Transverse colon (tissue), 4 donors: ENCODE measurements at regions of chr10 and their contacts with region 1.

Region 1: DNA sequence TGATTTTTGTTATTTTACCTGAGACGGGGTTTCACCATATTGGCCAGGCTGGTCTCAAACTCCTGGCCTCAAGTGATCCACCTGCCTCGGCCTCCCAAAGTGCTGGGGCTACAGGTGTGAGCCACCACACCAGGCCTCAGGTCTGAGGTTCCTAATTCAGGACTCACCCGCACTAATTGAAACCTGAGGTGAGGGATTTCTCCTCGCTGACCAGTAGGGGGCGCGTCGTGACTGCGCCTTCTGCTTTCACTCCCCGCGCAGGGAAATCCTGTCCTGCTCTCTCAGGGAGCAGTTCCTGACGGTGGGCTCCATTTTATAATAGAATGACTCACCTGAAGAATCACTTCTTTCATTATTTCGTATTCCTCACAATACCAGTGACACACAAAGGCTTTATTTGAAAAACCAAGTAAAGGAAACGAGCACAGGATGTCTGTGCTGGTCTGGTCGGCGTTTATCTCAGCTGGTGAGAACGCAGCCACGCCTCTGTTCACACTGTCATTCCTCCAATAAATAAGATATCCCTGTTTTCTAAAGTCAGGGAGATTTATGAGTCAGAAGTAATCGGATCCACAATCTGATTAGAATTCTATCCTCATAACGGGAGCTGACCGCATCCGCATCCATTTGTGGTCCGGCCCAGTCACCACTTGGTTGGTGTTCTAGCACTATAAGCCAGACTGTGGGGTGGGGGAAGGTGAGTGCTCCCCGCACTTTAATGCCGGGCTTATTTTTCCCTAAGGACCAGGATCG is 35.4 kb downstream of the BAG3 start:
- DNase-seq: peak; percentile 82
- H3K4me3 ChIP-seq: peak overlapping the region in 1 of 4 donors; percentile 30
- H3K27ac ChIP-seq: no peak overlapping the region
- H3K4me1 ChIP-seq: peaks cover 0 to 3% (median 2%) of the 10 kb centered on the region in 4 donors
- H3K27me3 ChIP-seq: no peaks in the 10 kb centered on the region
- CTCF ChIP-seq: peak; percentile 91 to 95 (median 95)
- EP300 ChIP-seq: no peak
- POLR2A ChIP-seq: no peak

Region 2: DNA sequence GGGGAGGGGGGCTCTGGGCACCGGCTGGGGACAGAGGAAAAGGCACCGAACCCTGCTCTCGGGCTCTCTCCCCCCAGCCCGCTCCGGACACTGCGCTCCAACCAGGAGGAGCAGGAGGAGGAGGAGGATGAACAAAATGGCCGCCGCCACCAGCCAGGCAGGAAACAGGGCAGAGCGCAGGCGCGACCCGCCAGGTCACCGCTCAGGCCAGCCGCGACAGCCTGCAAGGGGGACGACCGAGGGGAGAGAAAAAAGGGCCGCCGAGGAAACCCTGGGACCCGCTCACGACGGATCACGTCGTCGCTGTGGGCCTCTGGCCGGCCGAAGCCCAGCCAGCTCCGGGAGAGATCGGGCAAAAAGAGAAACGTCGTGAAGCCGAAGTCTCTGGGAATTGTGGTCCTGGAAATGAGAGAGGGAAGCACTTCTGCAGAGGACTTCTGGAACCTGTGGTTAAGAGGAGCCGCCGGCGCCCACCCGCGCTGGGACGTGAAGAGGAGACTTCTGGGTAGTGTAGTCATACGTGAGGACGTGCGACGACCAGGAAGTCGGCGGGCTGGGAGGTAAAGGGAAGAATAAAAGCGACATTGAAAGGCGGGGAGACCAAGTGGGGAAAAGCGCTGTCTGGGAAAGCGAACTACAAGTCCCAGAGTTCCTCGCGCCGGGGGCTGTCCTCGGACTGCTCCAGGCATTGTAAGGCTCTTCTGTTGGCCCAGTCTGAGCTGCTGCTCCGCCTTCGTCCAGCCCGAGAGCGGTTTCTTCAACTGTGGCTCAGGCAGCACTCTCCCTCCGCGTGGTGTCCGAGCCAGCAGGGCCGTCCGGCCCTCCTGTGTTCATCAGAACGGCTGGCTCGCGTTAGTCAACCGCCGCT is 89.8 kb before region 1 on chr10 and contains the start of gene TIAL1:
- in situ Hi-C with region 1: no loop called
- intact Hi-C with region 1: no loop called
- DNase-seq: peak; percentile 98
- H3K4me3 ChIP-seq: peak within 1 kb of the TSS; percentile 55 to 95 (median 80)
- H3K27ac ChIP-seq: peak within 1 kb of the TSS; percentile 97 to 100 (median 99)
- H3K4me1 ChIP-seq: peaks cover 18 to 48% (median 44%) of the 10 kb centered on the region in 4 donors
- H3K27me3 ChIP-seq: no peaks in the 10 kb centered on the region
- CTCF ChIP-seq: no peak
- EP300 ChIP-seq: no peak
- POLR2A ChIP-seq: peak; percentile 91
- total RNA-seq, gene TIAL1: 35.2 to 117 (median 66.7) TPM

Region 3: DNA sequence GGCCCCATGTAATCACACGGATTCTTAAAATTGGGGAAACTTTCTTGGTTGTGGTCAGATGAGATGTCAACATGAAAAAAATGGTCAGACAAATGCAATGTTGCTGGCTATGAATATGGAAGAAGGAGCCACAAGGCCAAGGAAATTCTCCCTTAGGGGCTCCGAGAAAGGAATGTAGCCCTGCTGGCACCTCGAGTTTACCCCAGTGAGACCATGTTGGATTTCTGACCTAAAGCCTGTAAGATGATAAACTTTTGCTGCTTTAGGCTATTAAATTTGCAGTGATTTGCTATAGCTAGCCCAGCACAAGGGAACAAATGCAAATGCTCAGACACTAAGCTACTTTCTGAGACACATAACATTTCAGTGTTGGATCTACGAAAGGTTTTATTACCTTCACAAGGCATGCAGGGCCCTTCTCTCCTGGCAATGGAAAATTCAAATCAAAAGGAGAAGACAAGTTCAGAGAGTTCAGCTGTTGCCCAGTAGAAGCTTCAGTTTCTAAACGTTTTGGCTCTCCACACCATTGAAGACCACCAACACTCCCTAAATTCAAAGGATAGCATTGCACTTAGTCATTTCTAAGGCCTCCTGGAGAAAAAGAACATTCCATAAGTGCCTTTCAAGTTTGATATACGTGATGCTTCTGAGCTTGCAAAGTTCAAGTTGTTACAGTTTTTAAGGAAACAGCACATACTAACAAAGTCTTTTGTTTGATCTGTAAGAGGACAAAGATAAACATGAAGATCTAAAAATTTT is 162.6 kb after region 1 on chr10:
- in situ Hi-C with region 1: loop called in 3 of 4 experiments (anchors 10 to 25 kb)
- intact Hi-C with region 1: no loop called
- DNase-seq: no peak
- H3K4me3 ChIP-seq: no peak overlapping the region
- H3K27ac ChIP-seq: no peak overlapping the region
- H3K4me1 ChIP-seq: no peaks in the 10 kb centered on the region
- H3K27me3 ChIP-seq: no peaks in the 10 kb centered on the region
- CTCF ChIP-seq: no peak
- EP300 ChIP-seq: no peak
- POLR2A ChIP-seq: no peak

Region 4: GRCh38 chr10:120161111-120161510 is 474.5 kb after region 1 on chr10:
- in situ Hi-C with region 1: no loop called
- intact Hi-C with region 1: no loop called
- DNase-seq: no peak
- H3K4me3 ChIP-seq: no peak overlapping the region
- H3K27ac ChIP-seq: no peak overlapping the region
- H3K4me1 ChIP-seq: no peaks in the 10 kb centered on the region
- H3K27me3 ChIP-seq: no peaks in the 10 kb centered on the region
- CTCF ChIP-seq: no peak
- EP300 ChIP-seq: no peak
- POLR2A ChIP-seq: no peak